Thyroid gland (tissue), 4 donors: ENCODE measurements at regions of chr5 and their contacts with region 1.

Region 1: DNA sequence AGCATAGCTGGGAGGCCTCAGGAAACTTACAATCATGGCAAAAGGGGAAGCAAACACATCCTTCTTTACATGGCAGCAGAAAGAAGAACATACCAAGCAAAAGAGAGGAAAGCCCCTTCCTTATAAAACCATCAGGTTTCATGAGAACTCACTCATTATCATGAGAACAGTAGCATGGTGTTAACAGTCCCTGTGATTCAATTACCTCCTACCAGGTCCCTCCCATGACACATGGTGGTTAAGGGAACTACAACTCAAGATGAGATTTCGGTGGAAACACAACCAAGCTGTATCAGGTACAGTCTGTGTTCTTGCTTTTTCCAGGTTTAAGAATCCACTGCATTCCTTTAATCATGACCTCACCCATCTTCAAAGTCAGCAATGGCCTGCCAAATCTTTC is 514.2 kb downstream of the KCTD16 start:
- DNase-seq: no peak
- H3K4me3 ChIP-seq: no peak overlapping the region
- H3K27ac ChIP-seq: no peak overlapping the region
- H3K4me1 ChIP-seq: no peaks in the 10 kb centered on the region
- H3K27me3 ChIP-seq: no peaks in the 10 kb centered on the region
- CTCF ChIP-seq: no peak
- POLR2A ChIP-seq: no peak

Region 2: GRCh38 chr5:144522698-144523097 is 162.2 kb before region 1 on chr5:
- intact Hi-C with region 1: loop called (anchors 10 kb)
- DNase-seq: no peak
- H3K4me3 ChIP-seq: no peak overlapping the region
- H3K27ac ChIP-seq: no peak overlapping the region
- H3K4me1 ChIP-seq: no peaks in the 10 kb centered on the region
- H3K27me3 ChIP-seq: no peaks in the 10 kb centered on the region
- CTCF ChIP-seq: no peak
- POLR2A ChIP-seq: no peak